H1 (cell line): ENCODE measurements at regions of chr2 and their contacts with region 1.

Region 1: DNA sequence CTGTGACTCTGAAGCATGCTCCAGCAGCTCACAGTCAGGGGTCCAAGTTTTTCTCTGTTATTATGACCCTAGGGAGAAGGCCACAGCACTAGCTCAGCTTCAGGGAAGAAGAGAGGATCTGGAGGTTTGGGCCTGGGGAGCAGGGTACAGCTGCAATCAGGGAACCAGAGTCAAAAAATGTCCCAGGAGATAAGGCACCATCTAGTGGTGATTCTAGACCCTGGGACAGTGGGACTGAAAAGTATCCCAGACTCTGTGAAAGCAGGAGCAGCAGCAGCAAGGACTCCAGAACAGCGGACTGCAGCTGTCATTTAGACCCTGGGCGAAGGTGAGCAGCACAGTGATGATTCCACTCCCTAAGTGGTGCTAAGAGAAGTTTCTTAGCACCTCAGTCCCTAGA is 278.4 kb upstream of the DDX18 start:
- DNase-seq: no peak
- H3K4me3 ChIP-seq: no peak overlapping the region
- H3K27ac ChIP-seq: no peak overlapping the region
- H3K4me1 ChIP-seq: no peaks in the 10 kb centered on the region
- H3K27me3 ChIP-seq: no peaks in the 10 kb centered on the region
- CTCF ChIP-seq: peak; percentile 54 to 84 (median 71)
- EP300 ChIP-seq: no peak
- POLR2A ChIP-seq: no peak
- RAD21 ChIP-seq: peak; percentile 78 to 82

Region 2: DNA sequence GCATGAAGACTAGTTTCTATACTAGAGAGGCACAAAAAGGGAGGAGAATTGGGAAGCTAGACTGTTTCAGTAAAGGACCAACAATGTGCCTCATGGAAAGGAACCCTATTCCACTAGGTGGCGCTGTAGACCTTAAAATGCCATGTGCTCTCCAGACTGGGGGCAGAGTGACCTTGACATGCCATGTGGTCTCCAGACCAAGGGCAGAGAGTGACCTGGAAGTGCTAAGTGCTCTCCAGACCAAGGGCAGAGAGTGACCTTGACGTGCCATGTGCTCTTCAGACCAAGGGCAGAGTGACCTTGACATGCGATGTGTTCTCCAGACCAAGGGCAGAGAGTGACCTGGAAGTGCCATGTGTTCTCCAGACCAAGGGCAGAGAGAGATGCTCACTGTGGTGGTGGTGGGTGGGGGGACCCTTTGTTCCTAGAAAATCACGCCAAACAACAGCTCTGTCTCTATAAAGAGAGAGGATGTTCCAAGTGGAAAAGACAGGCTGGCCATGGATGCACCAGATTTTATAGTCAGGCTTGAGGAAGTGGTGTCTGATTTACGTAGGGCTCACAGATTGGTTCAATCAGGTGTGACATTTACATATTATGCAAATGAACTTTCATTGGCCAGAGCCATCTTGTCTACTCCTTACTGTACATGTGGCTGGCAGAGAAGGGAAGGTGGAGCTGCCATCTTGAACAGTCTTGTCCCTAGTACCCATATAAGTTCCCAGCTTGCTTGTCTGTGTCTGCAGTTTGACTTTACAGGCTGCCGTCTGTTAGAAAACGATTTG is 65.6 kb before region 1 on chr2:
- CTCF ChIA-PET with region 1: interaction called, 43 read pairs
- POLR2A ChIA-PET with region 1: no interaction called
- DNase-seq: peak; percentile 41 to 76
- H3K4me3 ChIP-seq: no peak overlapping the region
- H3K27ac ChIP-seq: no peak overlapping the region
- H3K4me1 ChIP-seq: peaks cover 1 to 5% (median 3%) of the 10 kb centered on the region in 4 experiments; a peak in 1 of 7 replicates
- H3K27me3 ChIP-seq: no peaks in the 10 kb centered on the region
- CTCF ChIP-seq: peak; percentile 42 to 91 (median 87)
- EP300 ChIP-seq: no peak
- POLR2A ChIP-seq: no peak
- RAD21 ChIP-seq: peak; percentile 97 to 98

Region 3: GRCh38 chr2:117492224-117492851 is 43.8 kb before region 1 on chr2:
- CTCF ChIA-PET with region 1: interaction called, 14 read pairs
- POLR2A ChIA-PET with region 1: no interaction called
- DNase-seq: no peak
- H3K4me3 ChIP-seq: no peak overlapping the region
- H3K27ac ChIP-seq: no peak overlapping the region
- H3K4me1 ChIP-seq: peaks cover 0 to 8% (median 6%) of the 10 kb centered on the region in 4 experiments; a peak in 4 of 7 replicates
- H3K27me3 ChIP-seq: no peaks in the 10 kb centered on the region
- CTCF ChIP-seq: no peak
- EP300 ChIP-seq: no peak
- POLR2A ChIP-seq: no peak
- RAD21 ChIP-seq: no peak

Region 4: DNA sequence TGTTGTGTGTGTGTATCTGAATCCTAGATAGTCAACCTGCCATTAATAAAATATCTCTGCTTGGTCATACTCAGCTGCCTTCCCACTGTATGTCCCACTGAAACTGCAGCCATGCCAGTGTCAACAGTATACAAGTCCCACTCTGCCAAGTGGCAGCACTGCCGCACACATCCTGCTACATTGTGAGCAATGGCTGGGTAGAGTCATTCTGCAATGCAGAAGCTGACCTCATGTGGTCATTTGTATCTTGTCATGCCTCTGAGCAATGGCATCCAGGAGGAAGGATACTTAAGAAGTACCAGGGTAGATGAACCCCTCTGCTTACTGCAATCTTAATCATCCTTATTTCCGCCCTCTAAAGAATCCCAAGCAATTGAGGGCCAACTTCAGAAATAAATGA is 23.8 kb before region 1 on chr2:
- CTCF ChIA-PET with region 1: interaction called, 10 read pairs
- POLR2A ChIA-PET with region 1: no interaction called
- DNase-seq: no peak
- H3K4me3 ChIP-seq: no peak overlapping the region
- H3K27ac ChIP-seq: no peak overlapping the region
- H3K4me1 ChIP-seq: no peaks in the 10 kb centered on the region
- H3K27me3 ChIP-seq: no peaks in the 10 kb centered on the region
- CTCF ChIP-seq: no peak
- EP300 ChIP-seq: no peak
- POLR2A ChIP-seq: no peak
- RAD21 ChIP-seq: peak; percentile 24 to 40

Region 5: DNA sequence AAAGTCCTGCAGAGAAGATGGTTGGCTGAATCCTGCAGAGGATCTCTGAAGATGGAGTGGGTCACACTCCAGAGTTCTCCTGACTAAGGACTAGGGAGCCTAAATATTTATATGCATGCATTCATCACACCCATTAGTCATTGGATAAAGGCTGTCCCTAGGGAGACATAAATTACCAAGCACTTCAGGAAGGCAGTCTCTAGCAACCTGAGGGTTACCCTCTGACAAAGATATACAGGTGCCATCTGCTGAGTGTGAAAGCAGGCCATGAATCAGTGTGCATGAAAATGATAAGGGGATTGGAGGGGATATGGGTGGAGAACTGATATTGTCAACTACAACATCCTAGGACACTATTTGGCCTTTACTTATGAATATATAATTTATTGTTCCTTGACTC is 16.4 kb before region 1 on chr2:
- CTCF ChIA-PET with region 1: interaction called, 12 read pairs
- POLR2A ChIA-PET with region 1: no interaction called
- DNase-seq: no peak
- H3K4me3 ChIP-seq: no peak overlapping the region
- H3K27ac ChIP-seq: no peak overlapping the region
- H3K4me1 ChIP-seq: no peaks in the 10 kb centered on the region; a peak in 1 of 7 replicates
- H3K27me3 ChIP-seq: no peaks in the 10 kb centered on the region
- CTCF ChIP-seq: no peak
- EP300 ChIP-seq: no peak
- POLR2A ChIP-seq: no peak
- RAD21 ChIP-seq: no peak

Region 6: GRCh38 chr2:117551858-117552257 is 15.7 kb after region 1 on chr2:
- CTCF ChIA-PET with region 1: interaction called, 14 read pairs
- POLR2A ChIA-PET with region 1: interaction called, 3 read pairs
- DNase-seq: no peak
- H3K4me3 ChIP-seq: no peak overlapping the region
- H3K27ac ChIP-seq: no peak overlapping the region
- H3K4me1 ChIP-seq: peaks cover 0 to 18% (median 10%) of the 10 kb centered on the region in 4 experiments; a peak in 5 of 7 replicates
- H3K27me3 ChIP-seq: no peaks in the 10 kb centered on the region
- CTCF ChIP-seq: no peak
- EP300 ChIP-seq: no peak
- POLR2A ChIP-seq: no peak
- RAD21 ChIP-seq: no peak

Region 7: DNA sequence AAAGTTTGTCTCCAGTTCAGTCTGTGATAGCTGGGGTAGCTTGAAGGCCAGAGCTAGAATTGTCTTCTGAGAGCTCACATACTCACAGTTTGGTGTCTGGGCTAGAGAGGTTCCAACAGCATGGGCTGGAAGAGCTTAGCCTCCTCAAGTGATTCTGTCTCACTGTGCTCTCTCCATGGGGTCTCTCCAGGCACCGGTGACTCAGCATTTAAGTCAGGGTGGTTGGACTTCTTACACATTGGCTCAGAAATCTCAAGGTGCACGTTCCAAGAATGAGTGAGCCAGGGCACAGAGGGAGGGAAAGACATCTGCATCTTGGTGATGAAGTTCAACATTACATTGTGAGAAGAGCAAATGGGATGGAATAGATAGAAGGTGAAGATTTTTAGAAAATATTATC is 71.1 kb after region 1 on chr2:
- CTCF ChIA-PET with region 1: no interaction called
- POLR2A ChIA-PET with region 1: no interaction called
- DNase-seq: no peak
- H3K4me3 ChIP-seq: no peak overlapping the region
- H3K27ac ChIP-seq: no peak overlapping the region
- H3K4me1 ChIP-seq: peaks cover 0 to 7% (median 5%) of the 10 kb centered on the region in 4 experiments; a peak in 4 of 7 replicates
- H3K27me3 ChIP-seq: no peaks in the 10 kb centered on the region
- CTCF ChIP-seq: no peak
- EP300 ChIP-seq: no peak
- POLR2A ChIP-seq: no peak
- RAD21 ChIP-seq: no peak

Region 8: DNA sequence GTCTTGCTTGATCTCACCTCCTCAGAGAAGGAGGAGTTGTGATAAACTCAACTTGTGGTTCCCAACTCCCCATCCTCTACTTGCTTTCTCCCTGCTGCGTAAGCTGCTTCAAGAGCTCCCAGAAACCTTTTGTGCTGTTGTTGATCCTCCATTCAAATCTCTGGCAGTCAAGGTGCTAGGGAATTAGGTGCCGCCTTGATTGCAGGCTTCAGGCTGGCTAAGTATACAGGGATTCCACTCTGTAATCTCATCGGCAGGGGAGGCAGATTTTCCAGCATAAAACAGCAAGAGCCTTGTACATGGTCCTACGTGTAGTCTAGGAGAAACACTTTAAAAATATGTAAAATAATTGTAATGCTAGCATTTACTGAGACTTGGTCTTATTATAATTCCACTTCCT is 162.1 kb after region 1 on chr2:
- CTCF ChIA-PET with region 1: no interaction called
- POLR2A ChIA-PET with region 1: no interaction called
- DNase-seq: no peak
- H3K4me3 ChIP-seq: no peak overlapping the region
- H3K27ac ChIP-seq: no peak overlapping the region
- H3K4me1 ChIP-seq: no peaks in the 10 kb centered on the region
- H3K27me3 ChIP-seq: no peaks in the 10 kb centered on the region
- CTCF ChIP-seq: no peak
- EP300 ChIP-seq: no peak
- POLR2A ChIP-seq: no peak
- RAD21 ChIP-seq: no peak

Region 9: DNA sequence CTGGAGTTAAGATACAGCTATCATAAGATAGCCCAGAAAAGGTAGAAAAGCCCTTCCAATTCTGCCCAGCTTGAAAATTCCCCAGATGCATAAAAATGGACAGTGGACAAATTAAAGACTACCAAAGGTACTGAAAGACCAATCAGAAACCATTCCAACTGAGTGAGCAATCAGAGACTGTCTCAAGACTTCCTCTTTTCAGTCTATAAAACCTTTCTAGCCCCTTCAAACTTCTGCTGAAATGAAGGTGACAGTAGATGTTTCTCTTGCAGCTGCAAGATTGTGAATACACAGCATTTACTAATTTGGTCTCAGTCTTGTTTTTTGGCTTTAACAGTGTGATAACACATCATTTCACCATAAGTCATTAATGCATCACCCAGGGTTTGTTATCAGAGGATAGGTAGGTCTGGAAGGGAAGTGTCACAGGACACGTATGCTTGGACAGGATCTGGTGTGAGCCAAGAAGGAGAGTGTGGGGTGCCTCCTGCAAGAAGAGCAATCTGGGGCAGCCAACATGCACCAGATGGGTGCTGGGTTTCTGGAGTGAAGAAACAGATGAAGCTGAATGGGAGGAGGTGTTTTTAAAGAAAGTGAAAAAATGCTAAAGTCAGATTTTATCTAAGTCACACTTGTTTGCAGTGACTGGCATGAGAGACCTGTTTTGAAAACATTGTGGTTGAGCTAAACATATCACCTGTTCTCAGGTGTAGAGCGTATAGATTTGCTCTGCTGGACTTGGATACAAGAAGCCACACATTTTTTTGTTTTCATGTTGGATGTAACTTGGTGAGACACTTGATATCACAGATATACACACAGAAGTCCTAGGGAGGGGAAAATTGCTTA is 203.1 kb after region 1 on chr2:
- CTCF ChIA-PET with region 1: no interaction called
- POLR2A ChIA-PET with region 1: no interaction called
- DNase-seq: no peak
- H3K4me3 ChIP-seq: no peak overlapping the region
- H3K27ac ChIP-seq: no peak overlapping the region
- H3K4me1 ChIP-seq: no peaks in the 10 kb centered on the region
- H3K27me3 ChIP-seq: no peaks in the 10 kb centered on the region
- CTCF ChIP-seq: no peak
- EP300 ChIP-seq: no peak
- POLR2A ChIP-seq: no peak
- RAD21 ChIP-seq: no peak